ENCODE measurements at regions of chr1 and their contacts with region 1.

Region 1: GRCh38 chr1:240784776-240785175 is 172.8 kb upstream of the GREM2 start:
- DNase-seq: no peak

Region 2: GRCh38 chr1:240737766-240738265 is 47.0 kb before region 1 on chr1:
- intact Hi-C with region 1: loop called in 1 of 2 experiments (anchors 1 kb)
- DNase-seq: no peak